Posterior cingulate gyrus (tissue), 11 donors: ENCODE measurements at regions of chr6 and their contacts with region 1.

Region 1: DNA sequence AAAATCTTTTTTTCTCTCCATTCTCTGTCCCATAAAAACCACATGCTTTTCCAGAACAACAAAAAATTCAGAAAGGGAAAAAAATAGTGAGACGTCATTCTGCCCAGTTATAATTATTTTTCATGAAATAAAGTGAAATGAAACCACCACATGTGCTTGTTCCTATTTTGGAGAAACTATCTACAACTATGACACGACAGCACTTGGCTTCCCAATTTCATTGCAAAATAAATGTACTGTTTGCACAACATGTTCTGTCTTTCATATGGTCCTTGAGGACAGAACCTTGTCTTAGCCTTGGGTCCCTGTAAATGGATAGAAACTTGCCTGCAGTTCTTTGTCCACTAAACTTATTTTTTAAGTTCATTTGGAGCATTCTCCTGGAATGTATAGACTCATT is 5.6 kb upstream of the MAN1A1 start:
- DNase-seq: no peak

Region 2: GRCh38 chr6:119147101-119148053 is 207.8 kb before region 1 on chr6:
- intact Hi-C with region 1: loop called (anchors 5 kb)
- DNase-seq: peak in 2 of 10 donors; percentile 18 to 82